CD14-positive monocyte (primary cell): ENCODE measurements at regions of chr22 and their contacts with region 1.

Region 1: DNA sequence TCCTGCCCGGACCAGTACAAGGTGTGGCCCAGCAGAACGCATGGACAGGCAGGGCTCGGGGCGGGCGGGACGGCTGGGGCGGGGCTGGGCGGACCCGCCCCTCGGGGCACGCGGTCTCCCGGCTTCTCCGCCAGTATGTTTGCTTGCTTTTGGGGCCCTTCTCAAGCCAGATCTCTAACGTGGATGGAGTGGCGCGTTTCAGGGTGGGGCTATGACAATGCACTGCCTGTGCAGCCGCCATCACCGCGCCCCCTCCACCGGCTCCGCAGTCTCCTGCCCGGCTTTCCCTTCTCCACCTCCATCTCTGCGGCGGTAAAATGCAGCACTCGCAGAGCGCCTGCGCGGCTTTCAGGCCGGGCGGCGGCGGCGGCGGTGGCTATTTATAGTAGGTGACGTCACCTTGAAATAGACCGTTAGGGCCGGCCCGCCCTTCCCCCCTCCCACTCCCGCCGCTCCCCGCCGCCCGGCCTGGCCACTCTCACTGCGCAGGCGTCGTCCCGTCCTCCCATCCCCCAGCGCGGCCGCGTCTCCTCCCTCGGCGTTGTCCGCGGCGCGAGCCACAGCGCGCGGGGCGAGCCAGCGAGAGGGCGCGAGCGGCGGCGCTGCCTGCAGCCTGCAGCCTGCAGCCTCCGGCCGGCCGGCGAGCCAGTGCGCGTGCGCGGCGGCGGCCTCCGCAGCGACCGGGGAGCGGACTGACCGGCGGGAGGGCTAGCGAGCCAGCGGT is at the start of gene YWHAH:
- DNase-seq: peak; percentile 92 to 95 (median 93)
- H3K4me3 ChIP-seq: peak within 1 kb of the TSS; percentile 79 to 99 (median 96)
- H3K4me3 Mint-ChIP-seq: peak within 1 kb of the TSS in 1 of 2 donors; percentile 93
- H3K27ac ChIP-seq: peak within 1 kb of the TSS; percentile 79 to 85
- H3K27ac Mint-ChIP-seq: peak within 1 kb of the TSS; percentile 87 to 96 (median 94)
- H3K4me1 ChIP-seq: peaks cover 40 to 49% of the 10 kb centered on the region in 2 donors
- H3K4me1 Mint-ChIP-seq: peaks cover 34% of the 10 kb centered on the region
- H3K27me3 ChIP-seq: no peaks in the 10 kb centered on the region
- H3K27me3 Mint-ChIP-seq: peaks cover 0 to 3% (median 0%) of the 10 kb centered on the region in 3 donors
- CTCF ChIP-seq: no peak
- polyA plus RNA-seq, gene YWHAH: 59.5 to 136 (median 132) TPM

Region 2: GRCh38 chr22:31630331-31631329 is 313.5 kb before region 1 on chr22:
- intact Hi-C with region 1: loop called in 1 of 2 experiments (anchors 10 kb)
- DNase-seq: peak; percentile 73 to 91 (median 83)
- H3K4me3 ChIP-seq: peak overlapping the region; percentile 47 to 80 (median 55)
- H3K4me3 Mint-ChIP-seq: peak overlapping the region; percentile 81 to 87
- H3K27ac ChIP-seq: peak overlapping the region; percentile 73 to 75
- H3K27ac Mint-ChIP-seq: peak overlapping the region; percentile 86 to 96 (median 90)
- H3K4me1 ChIP-seq: peaks cover 51 to 66% of the 10 kb centered on the region in 2 donors
- H3K4me1 Mint-ChIP-seq: peaks cover 60% of the 10 kb centered on the region
- H3K27me3 ChIP-seq: no peaks in the 10 kb centered on the region
- H3K27me3 Mint-ChIP-seq: peaks cover 0 to 3% (median 0%) of the 10 kb centered on the region in 3 donors
- CTCF ChIP-seq: no peak

Region 3: GRCh38 chr22:31661851-31662656 is 282.1 kb before region 1 on chr22 and contains the start of gene PISD:
- intact Hi-C with region 1: loop called (anchors 10 kb)
- DNase-seq: peak; percentile 93 to 95 (median 94)
- H3K4me3 ChIP-seq: peak within 1 kb of the TSS; percentile 57 to 100 (median 92)
- H3K4me3 Mint-ChIP-seq: peak within 1 kb of the TSS; percentile 99 to 100
- H3K27ac ChIP-seq: peak within 1 kb of the TSS; percentile 62 to 95
- H3K27ac Mint-ChIP-seq: peak within 1 kb of the TSS; percentile 94 to 97 (median 96)
- H3K4me1 ChIP-seq: peaks cover 23 to 29% of the 10 kb centered on the region in 2 donors
- H3K4me1 Mint-ChIP-seq: peaks cover 23% of the 10 kb centered on the region
- H3K27me3 ChIP-seq: no peaks in the 10 kb centered on the region
- H3K27me3 Mint-ChIP-seq: peaks cover 0 to 1% (median 0%) of the 10 kb centered on the region in 3 donors
- CTCF ChIP-seq: no peak
- polyA plus RNA-seq, gene PISD: 38.1 to 112 (median 45.3) TPM

Region 4: DNA sequence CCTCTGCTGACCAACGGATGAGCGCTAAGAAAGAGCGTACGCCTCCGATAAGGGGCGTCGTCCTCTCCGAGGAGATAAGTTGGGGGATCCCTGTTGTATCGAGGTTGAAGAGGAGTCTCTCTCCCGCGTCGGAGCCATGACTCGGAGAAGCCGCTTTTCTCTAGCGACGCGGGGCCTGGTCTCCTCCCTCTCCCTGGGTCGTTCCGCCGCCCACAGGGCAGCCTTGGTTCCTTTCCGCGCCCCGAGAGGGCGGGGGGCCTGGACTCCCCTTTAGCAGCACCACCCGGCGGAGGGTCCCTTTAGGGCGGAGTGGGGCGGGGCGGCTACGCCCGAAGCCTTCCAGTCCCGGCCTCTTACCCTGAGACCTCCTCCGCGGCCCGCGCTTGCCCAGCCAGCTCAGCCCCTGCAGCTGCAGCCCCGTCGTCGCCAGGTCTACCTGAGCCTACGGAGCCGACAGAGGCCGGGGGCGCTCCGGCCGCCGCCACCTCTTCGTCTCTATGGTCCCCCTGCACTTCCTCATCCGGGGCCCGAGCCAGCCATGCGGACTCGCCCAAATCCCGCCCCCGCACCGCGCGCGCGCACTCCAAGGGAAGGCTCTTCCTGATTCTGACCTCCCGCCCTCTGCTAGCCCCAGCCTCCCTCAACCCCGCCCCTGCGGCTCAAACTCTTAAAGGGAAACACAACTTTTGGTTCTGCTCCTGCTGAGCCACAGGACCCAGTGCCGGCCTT is 194.3 kb before region 1 on chr22 and contains the start of gene PRR14L:
- intact Hi-C with region 1: loop called (anchors 5 to 10 kb)
- DNase-seq: peak; percentile 93 to 97 (median 96)
- H3K4me3 ChIP-seq: peak within 1 kb of the TSS; percentile 65 to 98 (median 92)
- H3K4me3 Mint-ChIP-seq: peak within 1 kb of the TSS; percentile 90 to 94
- H3K27ac ChIP-seq: peak within 1 kb of the TSS; percentile 77 to 97
- H3K27ac Mint-ChIP-seq: peak within 1 kb of the TSS; percentile 89 to 95 (median 93)
- H3K4me1 ChIP-seq: peaks cover 52 to 69% of the 10 kb centered on the region in 2 donors
- H3K4me1 Mint-ChIP-seq: peaks cover 57% of the 10 kb centered on the region
- H3K27me3 ChIP-seq: no peaks in the 10 kb centered on the region
- H3K27me3 Mint-ChIP-seq: peaks cover 0 to 5% (median 0%) of the 10 kb centered on the region in 3 donors
- CTCF ChIP-seq: no peak
- polyA plus RNA-seq, gene PRR14L: 13.2 to 41.4 (median 14.6) TPM

Region 5: GRCh38 chr22:31874821-31875220 is 69.3 kb before region 1 on chr22:
- intact Hi-C with region 1: loop called in 1 of 2 experiments (anchors 1 kb)
- DNase-seq: no peak
- H3K4me3 ChIP-seq: no peak overlapping the region
- H3K4me3 Mint-ChIP-seq: no peak overlapping the region
- H3K27ac ChIP-seq: no peak overlapping the region
- H3K27ac Mint-ChIP-seq: peak overlapping the region in 1 of 7 donors; percentile 70
- H3K4me1 ChIP-seq: peaks cover 16 to 19% of the 10 kb centered on the region in 2 donors
- H3K4me1 Mint-ChIP-seq: peaks cover 22% of the 10 kb centered on the region
- H3K27me3 ChIP-seq: no peaks in the 10 kb centered on the region
- H3K27me3 Mint-ChIP-seq: no peaks in the 10 kb centered on the region
- CTCF ChIP-seq: no peak

Region 6: DNA sequence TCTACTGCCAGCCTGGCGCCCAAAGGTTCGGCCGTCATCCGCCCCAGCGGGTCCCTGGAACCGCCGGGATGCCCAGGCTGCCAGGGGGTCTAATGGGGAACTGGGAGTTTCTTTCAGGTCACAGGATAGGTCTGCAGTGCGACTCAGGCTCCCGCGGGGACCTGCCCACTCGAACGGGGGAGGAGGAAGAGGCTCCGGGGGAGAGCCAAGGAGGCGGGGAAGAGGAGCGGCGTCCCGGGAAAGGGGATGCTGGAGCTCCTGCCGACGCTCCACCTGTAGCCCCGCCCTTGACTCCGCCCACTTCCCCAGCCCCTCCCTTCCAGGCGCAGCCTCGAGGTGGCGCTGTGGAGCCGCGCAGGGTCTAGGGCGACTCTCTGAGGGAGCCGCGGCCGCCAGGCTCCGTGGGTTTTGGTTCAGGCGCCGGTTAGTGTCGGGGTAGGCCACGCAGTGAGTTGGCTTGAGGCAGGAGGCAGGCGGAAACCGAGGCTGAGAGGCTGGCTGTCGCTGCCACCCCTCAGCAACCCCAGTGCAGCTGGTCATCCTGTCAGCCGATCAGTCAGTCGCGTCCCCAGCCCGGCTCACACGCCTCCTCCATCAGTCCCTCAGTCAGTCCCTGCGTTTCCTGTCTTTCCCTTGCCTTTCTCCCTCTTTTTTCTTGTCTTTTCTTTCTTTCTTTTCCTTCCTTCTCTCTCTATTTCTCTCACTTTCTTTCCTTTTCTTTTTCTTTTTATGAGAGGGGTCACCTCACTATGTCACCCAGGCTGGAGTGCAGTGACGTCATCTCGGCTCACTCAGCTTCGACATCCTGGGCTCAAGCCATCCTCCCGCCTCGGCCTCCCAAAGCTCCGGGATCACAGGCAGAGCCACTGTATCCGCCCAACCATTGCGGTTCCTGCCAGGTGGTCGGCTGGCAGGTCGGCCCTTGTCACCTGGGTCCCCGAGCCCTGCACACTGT is 26.6 kb after region 1 on chr22:
- intact Hi-C with region 1: loop called in 1 of 2 experiments (anchors 2 kb)
- DNase-seq: peak; percentile 72 to 78 (median 76)
- H3K4me3 ChIP-seq: peak overlapping the region; percentile 9 to 67 (median 33)
- H3K4me3 Mint-ChIP-seq: peak overlapping the region; percentile 76 to 83
- H3K27ac ChIP-seq: no peak overlapping the region
- H3K27ac Mint-ChIP-seq: peak overlapping the region in 4 of 7 donors; percentile 32 to 67 (median 50)
- H3K4me1 ChIP-seq: peaks cover 12 to 13% of the 10 kb centered on the region in 2 donors
- H3K4me1 Mint-ChIP-seq: peaks cover 12% of the 10 kb centered on the region
- H3K27me3 ChIP-seq: peaks cover 0 to 12% of the 10 kb centered on the region in 2 donors
- H3K27me3 Mint-ChIP-seq: peaks cover 12 to 26% (median 20%) of the 10 kb centered on the region in 3 donors
- CTCF ChIP-seq: peak; percentile 97